ENCODE measurements at regions of chr4 and their contacts with region 1.

Region 1: DNA sequence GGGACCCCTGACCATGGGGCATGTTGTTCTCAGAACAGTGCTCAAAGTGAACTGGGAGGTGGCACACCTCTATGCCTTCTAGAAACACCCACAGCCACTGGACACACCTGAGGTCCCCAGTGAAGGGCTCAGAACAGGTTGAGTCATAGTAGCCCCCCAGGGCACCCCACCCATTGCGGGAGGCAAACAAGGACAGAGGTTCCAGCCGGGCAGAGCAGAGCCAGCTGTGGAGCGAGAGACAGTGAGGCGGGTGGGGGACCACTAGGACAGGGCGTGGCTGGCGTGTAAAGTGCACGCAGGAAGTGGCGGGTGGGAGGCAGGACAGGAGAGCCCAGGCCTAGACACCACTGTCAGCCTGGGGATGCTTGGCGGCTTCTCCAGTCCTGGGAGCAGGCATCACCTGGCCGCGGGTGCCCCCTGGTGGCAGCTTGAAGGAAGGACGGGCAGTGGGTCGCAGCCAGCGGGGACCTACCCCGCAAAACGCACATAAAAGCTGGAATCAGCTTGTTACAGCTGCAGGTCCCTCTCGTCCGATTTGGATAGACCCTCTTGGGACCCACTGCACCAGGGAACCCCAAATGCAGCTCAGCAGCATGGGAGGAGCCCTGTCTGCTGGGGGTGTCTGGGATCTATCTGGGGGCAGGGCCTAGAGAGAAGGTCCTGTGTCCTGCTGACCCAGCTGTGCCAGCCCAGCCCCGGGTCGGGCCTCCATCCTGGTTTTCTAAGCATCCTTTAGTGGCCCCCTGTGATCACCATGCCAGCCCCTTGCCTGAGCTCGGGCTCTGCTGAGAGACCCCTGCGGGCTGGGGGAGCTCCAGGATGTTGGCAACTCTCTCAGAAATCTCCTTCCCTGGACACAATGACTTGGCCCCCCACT is 57.6 kb downstream of the WFS1 start:
- DNase-seq: peak; percentile 76 to 85
- ATAC-seq: peak; percentile 79 to 89 (median 86)
- H3K4me3 ChIP-seq: no peak overlapping the region
- H3K27ac ChIP-seq: no peak overlapping the region
- H3K4me1 ChIP-seq: no peaks in the 10 kb centered on the region
- H3K27me3 ChIP-seq: peaks cover 0 to 30% (median 6%) of the 10 kb centered on the region in 3 donors
- CTCF ChIP-seq: peak; percentile 93

Region 2: GRCh38 chr4:5998333-5998936 is 328.8 kb before region 1 on chr4:
- intact Hi-C with region 1: loop called in 1 of 2 experiments (anchors 5 kb)
- DNase-seq: peak; percentile 25 to 41
- ATAC-seq: peak in 3 of 4 donors; percentile 54 to 65 (median 60)
- H3K4me3 ChIP-seq: no peak overlapping the region
- H3K27ac ChIP-seq: no peak overlapping the region
- H3K4me1 ChIP-seq: no peaks in the 10 kb centered on the region
- H3K27me3 ChIP-seq: peaks cover 0 to 10% (median 2%) of the 10 kb centered on the region in 3 donors
- CTCF ChIP-seq: peak; percentile 68

Region 3: DNA sequence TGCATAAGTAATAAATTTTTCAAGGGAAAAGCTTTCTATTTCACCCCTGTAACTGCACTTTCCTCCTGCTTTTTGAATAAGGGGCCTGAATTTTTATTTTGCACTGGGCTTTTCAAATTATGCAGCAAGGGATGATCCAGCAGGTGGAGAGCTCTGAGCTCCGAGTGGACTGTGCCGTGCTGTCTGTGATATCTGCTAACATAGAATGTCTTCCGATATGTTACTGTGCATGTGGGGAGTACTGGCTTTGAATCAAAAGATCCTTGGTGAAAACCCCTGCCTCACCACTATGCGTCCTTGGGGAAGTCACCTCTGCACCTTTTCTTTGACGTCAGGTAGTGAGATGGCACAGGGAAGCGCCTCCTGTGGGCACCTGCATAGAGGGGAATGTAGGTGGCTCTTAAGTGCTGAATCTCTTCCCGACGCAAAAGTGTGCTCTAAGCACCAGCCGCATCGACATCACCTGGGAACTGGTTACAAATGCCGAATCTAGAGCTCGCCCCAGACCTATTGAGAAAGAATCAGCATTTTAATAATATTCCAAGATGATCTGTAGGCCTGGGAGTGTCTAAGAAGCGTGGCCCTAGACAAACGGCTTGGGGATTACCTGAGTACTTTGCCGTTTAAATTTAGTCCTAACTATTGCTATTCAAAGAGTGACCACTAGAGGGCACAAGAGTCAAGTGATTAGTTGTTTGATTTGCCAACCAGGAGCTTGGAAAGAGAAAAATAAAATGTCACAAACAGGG is 76.9 kb before region 1 on chr4:
- intact Hi-C with region 1: loop called (anchors 1 to 2 kb)
- DNase-seq: no peak
- ATAC-seq: peak in 3 of 4 donors; percentile 44 to 66 (median 64)
- H3K4me3 ChIP-seq: no peak overlapping the region
- H3K27ac ChIP-seq: no peak overlapping the region
- H3K4me1 ChIP-seq: no peaks in the 10 kb centered on the region
- H3K27me3 ChIP-seq: peaks cover 0 to 34% (median 7%) of the 10 kb centered on the region in 3 donors
- CTCF ChIP-seq: peak; percentile 87

Region 4: GRCh38 chr4:6546681-6547447 is 219.6 kb after region 1 on chr4:
- intact Hi-C with region 1: loop called in 1 of 2 experiments (anchors 10 kb)
- DNase-seq: no peak
- ATAC-seq: peak in 2 of 4 donors; percentile 37 to 53
- H3K4me3 ChIP-seq: no peak overlapping the region
- H3K27ac ChIP-seq: no peak overlapping the region
- H3K4me1 ChIP-seq: no peaks in the 10 kb centered on the region
- H3K27me3 ChIP-seq: peaks cover 0 to 24% (median 6%) of the 10 kb centered on the region in 3 donors
- CTCF ChIP-seq: peak; percentile 69

Measured in psoas muscle (tissue), 8 donors.